Activated naive CD4-positive, alpha-beta T cell treated with anti-CD3 and anti-CD28 coated beads for 36 hours (primary cell): ENCODE measurements at regions of chr5 and their contacts with region 1.

Region 1: DNA sequence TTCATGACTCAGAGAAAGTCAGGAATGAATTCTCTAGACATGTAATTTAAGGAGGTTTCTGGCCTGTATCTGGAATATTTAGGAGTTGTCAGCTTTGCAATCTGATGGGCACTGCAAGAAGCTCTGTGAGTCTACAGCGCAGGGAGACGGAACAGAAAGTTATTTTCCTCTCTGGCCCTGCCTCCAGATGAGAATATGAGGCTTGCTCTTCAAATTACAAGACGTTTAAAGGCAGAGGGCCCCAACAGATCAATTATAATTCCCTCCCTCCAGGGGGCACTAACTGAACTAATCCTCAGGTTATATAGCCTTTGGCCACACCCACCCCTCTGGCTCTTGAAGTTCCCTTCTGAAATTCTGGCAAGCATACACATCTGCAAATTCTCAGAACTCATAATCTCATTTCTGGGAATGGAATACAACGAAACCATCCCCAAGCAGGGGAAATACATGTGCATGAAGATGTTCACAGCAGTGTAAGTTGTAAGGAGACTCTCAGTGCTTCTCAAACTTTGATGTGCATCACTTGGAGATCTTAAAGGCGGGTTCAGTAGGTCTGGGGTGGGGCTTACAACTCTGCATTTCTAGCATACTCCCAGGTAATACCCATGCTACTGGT is 307.6 kb downstream of the CWC27 start:
- DNase-seq: peak; percentile 65
- H3K4me3 Mint-ChIP-seq: no peak overlapping the region
- H3K27ac Mint-ChIP-seq: no peak overlapping the region
- H3K4me1 Mint-ChIP-seq: peaks cover 8% of the 10 kb centered on the region
- H3K27me3 Mint-ChIP-seq: no peaks in the 10 kb centered on the region

Region 2: DNA sequence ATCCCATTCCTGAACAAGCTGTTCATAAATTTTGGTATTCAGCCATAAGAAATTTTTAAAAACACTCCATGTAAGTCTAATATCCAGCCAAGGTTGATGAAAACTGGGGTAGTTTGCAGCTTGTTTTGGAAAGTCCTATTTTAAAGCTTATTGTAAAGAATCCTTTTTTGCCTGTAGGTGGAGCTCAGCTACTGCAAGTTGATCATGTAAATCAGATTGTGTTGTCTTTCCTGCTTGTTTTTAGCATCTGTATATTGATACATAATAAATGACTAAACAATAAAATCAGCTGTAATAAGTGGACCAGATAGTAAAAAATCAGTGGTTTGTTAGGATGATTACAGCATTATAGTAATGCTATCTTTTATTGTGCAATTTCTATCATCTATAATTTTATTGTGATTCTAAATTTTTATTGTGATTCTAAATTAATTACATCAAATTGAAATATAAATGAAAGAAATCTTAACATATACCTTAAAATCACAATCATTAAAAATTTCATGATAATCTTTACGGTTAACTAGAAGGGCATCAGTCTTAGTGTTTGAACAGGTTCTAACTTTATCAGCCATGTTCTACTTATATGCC is 265.2 kb before region 1 on chr5:
- CTCF ChIA-PET with region 1: no interaction called
- intact Hi-C with region 1: loop called (anchors 1 kb)
- DNase-seq: peak; percentile 8
- H3K4me3 Mint-ChIP-seq: no peak overlapping the region
- H3K27ac Mint-ChIP-seq: no peak overlapping the region
- H3K4me1 Mint-ChIP-seq: peaks cover 4% of the 10 kb centered on the region
- H3K27me3 Mint-ChIP-seq: no peaks in the 10 kb centered on the region

Region 3: GRCh38 chr5:65382582-65382981 is 306.2 kb after region 1 on chr5:
- CTCF ChIA-PET with region 1: no interaction called
- intact Hi-C with region 1: loop called (anchors 10 kb)
- DNase-seq: no peak
- H3K4me3 Mint-ChIP-seq: no peak overlapping the region
- H3K27ac Mint-ChIP-seq: no peak overlapping the region
- H3K4me1 Mint-ChIP-seq: no peaks in the 10 kb centered on the region
- H3K27me3 Mint-ChIP-seq: no peaks in the 10 kb centered on the region

Region 4: GRCh38 chr5:65451436-65451835 is 375.1 kb after region 1 on chr5:
- CTCF ChIA-PET with region 1: no interaction called
- intact Hi-C with region 1: no loop called
- DNase-seq: no peak
- H3K4me3 Mint-ChIP-seq: no peak overlapping the region
- H3K27ac Mint-ChIP-seq: no peak overlapping the region
- H3K4me1 Mint-ChIP-seq: no peaks in the 10 kb centered on the region
- H3K27me3 Mint-ChIP-seq: no peaks in the 10 kb centered on the region